Breast epithelium (tissue), 4 donors: ENCODE measurements at regions of chr3 and their contacts with region 1.

Region 1: GRCh38 chr3:43273416-43273815 is 12.9 kb upstream of the SNRK start:
- DNase-seq: no peak
- H3K4me3 ChIP-seq: no peak overlapping the region
- H3K27ac ChIP-seq: no peak overlapping the region
- H3K4me1 ChIP-seq: no peaks in the 10 kb centered on the region
- H3K27me3 ChIP-seq: no peaks in the 10 kb centered on the region
- CTCF ChIP-seq: no peak
- POLR2A ChIP-seq: no peak

Region 2: DNA sequence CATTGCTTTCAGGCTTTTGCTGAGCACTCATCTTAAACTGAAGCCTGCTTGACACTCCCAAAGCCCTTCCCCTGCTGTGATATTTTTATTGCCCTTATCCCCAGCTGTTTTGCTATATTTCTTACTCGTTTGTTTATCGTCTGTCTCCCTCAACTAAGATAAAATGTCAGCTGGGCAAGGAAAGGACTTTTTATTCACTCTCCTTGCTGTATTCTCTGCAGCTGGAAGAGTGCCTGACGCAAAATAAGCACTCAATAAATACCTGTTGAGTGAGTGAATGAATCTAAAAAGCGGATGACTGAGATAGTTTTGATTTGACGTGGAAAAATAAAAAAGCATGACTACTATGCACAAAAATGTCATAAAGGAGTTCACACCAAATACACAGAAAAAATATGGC is 82.8 kb before region 1 on chr3:
- intact Hi-C with region 1: no loop called
- DNase-seq: no peak
- H3K4me3 ChIP-seq: no peak overlapping the region
- H3K27ac ChIP-seq: no peak overlapping the region
- H3K4me1 ChIP-seq: no peaks in the 10 kb centered on the region
- H3K27me3 ChIP-seq: no peaks in the 10 kb centered on the region
- CTCF ChIP-seq: no peak
- POLR2A ChIP-seq: no peak

Region 3: GRCh38 chr3:44396200-44397171 is 1123.1 kb after region 1 on chr3:
- intact Hi-C with region 1: loop called (anchors 5 kb)
- DNase-seq: no peak
- H3K4me3 ChIP-seq: no peak overlapping the region
- H3K27ac ChIP-seq: no peak overlapping the region
- H3K4me1 ChIP-seq: no peaks in the 10 kb centered on the region
- H3K27me3 ChIP-seq: no peaks in the 10 kb centered on the region
- CTCF ChIP-seq: no peak
- POLR2A ChIP-seq: no peak